ENCODE measurements at regions of chr17 and their contacts with region 1.

Region 1: GRCh38 chr17:36784633-36785032 is 152.6 kb upstream of the LHX1 start:
- DNase-seq: no peak

Region 2: GRCh38 chr17:36731811-36732210 is 52.8 kb before region 1 on chr17:
- intact Hi-C with region 1: loop called in 1 of 2 experiments (anchors 5 kb)
- DNase-seq: no peak

Region 3: DNA sequence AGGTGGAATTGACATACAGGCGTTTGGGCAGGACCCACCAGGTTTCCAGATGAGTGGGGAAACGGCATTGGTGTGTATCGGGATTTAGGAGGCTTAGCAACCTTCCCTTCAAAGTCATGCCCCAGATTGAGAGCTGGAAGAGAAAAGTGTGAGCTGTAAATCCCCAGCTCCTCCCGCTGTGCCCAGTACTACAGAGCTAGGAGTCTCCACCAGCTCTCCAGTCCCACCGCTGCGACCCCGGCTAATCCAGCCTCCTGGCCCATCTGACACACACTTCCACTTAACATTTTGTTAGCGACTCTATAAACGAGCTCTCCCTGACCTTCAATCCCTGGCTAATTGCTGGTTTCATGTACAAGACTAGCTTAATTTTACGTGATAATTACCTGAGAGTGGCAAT is 122.8 kb after region 1 on chr17:
- intact Hi-C with region 1: no loop called
- DNase-seq: no peak

Measured in posterior vena cava (tissue), 2 donors.